K562 (cell line): ENCODE measurements at regions of chr4 and their contacts with region 1.

Region 1: GRCh38 chr4:118981839-118982381 is 93.3 kb downstream of the SYNPO2 start:
- DNase-seq: peak; percentile 48 to 68 (median 54)
- ATAC-seq: peak; percentile 91
- H3K4me3 ChIP-seq: no peak overlapping the region
- H3K27ac ChIP-seq: no peak overlapping the region
- H3K4me1 ChIP-seq: no peaks in the 10 kb centered on the region
- H3K27me3 ChIP-seq: peaks cover 0 to 7% of the 10 kb centered on the region in 2 experiments; a peak in 2 of 5 replicates
- CTCF ChIP-seq: peak; percentile 73 to 82 (median 75)
- EP300 ChIP-seq: no peak
- POLR2A ChIP-seq: no peak
- RAD21 ChIP-seq: peak; percentile 81 to 82

Region 2: DNA sequence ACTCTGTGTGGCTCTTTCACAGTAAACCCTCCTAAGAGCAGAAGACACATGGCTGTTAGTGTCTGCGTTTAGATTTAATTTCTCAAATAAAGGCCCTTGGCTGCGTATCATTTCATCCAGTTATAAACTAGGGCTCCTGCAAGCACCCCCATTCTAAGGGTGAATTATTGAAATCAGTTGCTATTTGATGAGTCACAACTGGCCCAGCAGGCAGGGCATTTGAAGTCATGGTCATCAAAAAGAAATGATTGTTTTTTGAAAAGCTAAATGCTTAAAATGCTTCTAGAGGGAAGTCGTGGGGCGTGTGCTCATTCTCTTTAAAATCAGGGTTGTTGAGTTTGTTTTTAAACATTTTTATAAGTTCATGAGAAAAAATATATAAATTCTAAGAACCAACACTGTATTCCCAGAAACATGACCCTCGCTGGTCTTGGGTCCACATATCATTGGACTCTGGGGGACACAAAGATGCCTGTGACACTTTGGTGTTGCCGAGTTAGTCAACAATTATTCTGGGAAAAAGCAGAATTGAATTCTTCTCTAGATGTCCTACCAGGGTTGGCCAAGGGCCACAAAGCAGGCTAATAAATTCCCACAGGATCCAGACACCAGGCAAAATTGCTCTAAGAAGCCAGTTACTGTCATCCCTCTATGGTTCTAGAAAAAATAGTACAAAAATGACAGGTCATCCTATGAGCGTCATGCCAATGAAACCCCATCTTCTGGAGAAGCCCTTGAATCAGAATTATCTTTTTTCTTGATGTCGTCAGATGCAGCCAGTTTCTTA is 54.2 kb after region 1 on chr4:
- CTCF ChIA-PET with region 1: no interaction called
- POLR2A ChIA-PET with region 1: no interaction called
- in situ Hi-C with region 1: no loop called
- intact Hi-C with region 1: loop called (anchors 2 kb)
- DNase-seq: no peak
- ATAC-seq: no peak
- H3K4me3 ChIP-seq: no peak overlapping the region
- H3K27ac ChIP-seq: no peak overlapping the region
- H3K4me1 ChIP-seq: no peaks in the 10 kb centered on the region
- H3K27me3 ChIP-seq: peaks cover 2 to 12% of the 10 kb centered on the region in 2 experiments; a peak in 3 of 5 replicates
- CTCF ChIP-seq: no peak
- EP300 ChIP-seq: no peak
- POLR2A ChIP-seq: no peak
- RAD21 ChIP-seq: no peak

Region 3: GRCh38 chr4:119041951-119042560 is 60.1 kb after region 1 on chr4:
- CTCF ChIA-PET with region 1: no interaction called
- POLR2A ChIA-PET with region 1: no interaction called
- in situ Hi-C with region 1: no loop called
- intact Hi-C with region 1: loop called (anchors 2 kb)
- DNase-seq: peak; percentile 33 to 71 (median 50)
- ATAC-seq: peak; percentile 97
- H3K4me3 ChIP-seq: no peak overlapping the region
- H3K27ac ChIP-seq: no peak overlapping the region
- H3K4me1 ChIP-seq: no peaks in the 10 kb centered on the region
- H3K27me3 ChIP-seq: no peaks in the 10 kb centered on the region
- CTCF ChIP-seq: peak; percentile 65 to 72 (median 69)
- EP300 ChIP-seq: no peak
- POLR2A ChIP-seq: no peak
- RAD21 ChIP-seq: peak; percentile 77 to 84

Region 4: GRCh38 chr4:119286377-119287002 is 304.6 kb after region 1 on chr4:
- CTCF ChIA-PET with region 1: interaction called, 18 read pairs
- POLR2A ChIA-PET with region 1: no interaction called
- in situ Hi-C with region 1: no loop called
- intact Hi-C with region 1: loop called (anchors 5 kb)
- DNase-seq: peak in 1 of 4 experiments; percentile 56
- ATAC-seq: no peak
- H3K4me3 ChIP-seq: no peak overlapping the region
- H3K27ac ChIP-seq: no peak overlapping the region
- H3K4me1 ChIP-seq: no peaks in the 10 kb centered on the region
- H3K27me3 ChIP-seq: no peaks in the 10 kb centered on the region
- CTCF ChIP-seq: peak; percentile 44 to 76 (median 47); a peak in 5 of 6 replicates
- EP300 ChIP-seq: no peak
- POLR2A ChIP-seq: no peak
- RAD21 ChIP-seq: peak; percentile 76 to 79

Region 5: GRCh38 chr4:119559044-119559647 is 577.2 kb after region 1 on chr4:
- CTCF ChIA-PET with region 1: no interaction called
- POLR2A ChIA-PET with region 1: no interaction called
- in situ Hi-C with region 1: no loop called
- intact Hi-C with region 1: loop called (anchors 10 kb)
- DNase-seq: peak in 3 of 4 experiments; percentile 7 to 28 (median 12)
- ATAC-seq: peak; percentile 75
- H3K4me3 ChIP-seq: no peak overlapping the region
- H3K27ac ChIP-seq: no peak overlapping the region
- H3K4me1 ChIP-seq: peaks cover 0 to 3% of the 10 kb centered on the region in 2 experiments; a peak in 1 of 5 replicates
- H3K27me3 ChIP-seq: no peaks in the 10 kb centered on the region
- CTCF ChIP-seq: peak in 1 of 3 experiments; percentile 64; a peak in 2 of 6 replicates
- EP300 ChIP-seq: no peak
- POLR2A ChIP-seq: no peak
- RAD21 ChIP-seq: peak; percentile 28 to 46; a peak in 2 of 4 replicates

Region 6: DNA sequence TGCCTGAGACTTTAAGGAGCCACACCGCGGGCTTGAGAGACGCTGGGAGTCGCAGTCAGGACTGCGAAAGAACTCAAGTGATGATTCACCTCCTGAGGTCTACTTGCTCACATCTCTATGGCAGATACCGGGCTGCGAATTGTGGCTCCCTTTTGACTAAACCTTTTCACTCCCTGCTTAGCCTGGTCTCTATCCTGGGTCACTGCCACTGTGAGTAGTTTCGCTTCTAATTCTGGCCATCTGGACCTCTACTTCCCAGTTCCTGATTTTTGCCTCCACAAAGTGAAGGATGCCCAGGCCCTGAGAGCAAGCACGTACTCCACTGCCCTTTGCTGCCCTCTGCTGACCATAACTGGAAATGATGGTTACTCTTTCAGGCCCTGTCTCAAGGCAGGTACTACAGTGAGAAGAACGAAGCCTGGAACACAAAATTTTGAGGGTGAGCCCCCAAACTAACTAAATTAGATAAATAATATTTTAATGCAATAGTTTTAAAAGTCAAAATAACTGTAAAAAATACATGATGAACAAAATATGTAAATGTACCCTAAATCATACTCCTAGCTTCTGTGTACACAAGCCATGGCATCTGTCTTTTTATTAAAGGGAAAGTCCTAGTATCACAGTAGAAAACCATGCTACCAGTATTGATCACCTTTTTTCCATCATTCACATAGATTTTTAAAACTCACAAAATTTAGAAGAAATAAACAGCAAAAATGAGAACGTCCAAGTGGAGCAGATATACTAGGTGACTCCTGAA is 1068.0 kb after region 1 on chr4:
- CTCF ChIA-PET with region 1: no interaction called
- POLR2A ChIA-PET with region 1: no interaction called
- in situ Hi-C with region 1: no loop called
- intact Hi-C with region 1: loop called (anchors 2 kb)
- DNase-seq: peak; percentile 59 to 81 (median 66)
- ATAC-seq: peak; percentile 95
- H3K4me3 ChIP-seq: no peak overlapping the region
- H3K27ac ChIP-seq: no peak overlapping the region
- H3K4me1 ChIP-seq: no peaks in the 10 kb centered on the region; a peak in 1 of 5 replicates
- H3K27me3 ChIP-seq: no peaks in the 10 kb centered on the region
- CTCF ChIP-seq: peak; percentile 71 to 81 (median 79)
- EP300 ChIP-seq: no peak
- POLR2A ChIP-seq: no peak
- RAD21 ChIP-seq: peak; percentile 71 to 78